ENCODE measurements at regions of chr2 and their contacts with region 1.

Region 1: GRCh38 chr2:25558262-25558661 is 115.1 kb downstream of the DTNB start:
- DNase-seq: peak; percentile 61
- H3K4me3 Mint-ChIP-seq: peak overlapping the region; percentile 34
- H3K27ac Mint-ChIP-seq: peak overlapping the region; percentile 94
- H3K4me1 Mint-ChIP-seq: peaks cover 59% of the 10 kb centered on the region
- H3K27me3 Mint-ChIP-seq: no peaks in the 10 kb centered on the region

Region 2: DNA sequence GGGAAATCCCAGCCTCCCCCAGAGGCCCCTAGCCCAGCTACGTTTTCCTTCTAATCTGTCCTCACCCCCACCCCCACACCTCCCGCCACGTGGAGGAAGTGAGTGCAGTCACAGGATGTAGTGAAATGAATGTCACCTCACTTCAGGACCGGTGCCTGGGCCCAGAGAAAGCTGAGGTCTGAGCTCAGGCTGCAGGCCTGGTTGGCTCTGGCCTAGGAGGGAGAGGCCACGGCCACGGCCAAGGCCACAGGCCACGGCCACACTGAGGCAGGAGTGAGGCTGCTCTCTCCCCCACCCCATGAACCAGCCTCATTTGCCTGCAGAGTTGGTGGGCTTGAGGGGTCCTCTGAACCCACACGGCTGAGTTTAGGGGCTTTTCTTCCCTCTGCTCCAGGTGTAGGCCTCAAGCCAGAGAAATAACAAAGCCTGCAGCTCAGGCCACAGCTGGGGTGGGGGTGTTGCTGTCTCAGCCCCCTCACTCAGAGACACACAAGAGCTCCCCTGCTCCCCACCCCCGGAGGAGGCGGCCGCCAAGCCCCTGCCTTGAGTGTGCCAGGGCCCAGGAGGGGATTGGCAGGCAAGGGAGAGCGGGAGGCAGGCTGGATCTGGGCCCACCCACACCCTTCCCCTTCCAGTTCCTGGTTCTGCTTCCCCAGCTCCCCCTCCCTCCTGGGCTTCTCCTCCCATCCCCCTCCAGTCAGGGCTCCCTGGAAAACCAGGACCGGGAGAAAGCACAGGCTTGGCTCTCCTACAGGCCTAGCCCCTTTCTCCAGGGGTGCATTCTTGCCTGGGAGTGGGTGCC is 243.5 kb before region 1 on chr2:
- intact Hi-C with region 1: loop called (anchors 2 kb)
- DNase-seq: peak; percentile 72
- H3K4me3 Mint-ChIP-seq: peak overlapping the region; percentile 86
- H3K27ac Mint-ChIP-seq: peak overlapping the region; percentile 97
- H3K4me1 Mint-ChIP-seq: peaks cover 53% of the 10 kb centered on the region
- H3K27me3 Mint-ChIP-seq: no peaks in the 10 kb centered on the region

Region 3: GRCh38 chr2:25362049-25362433 is 196.2 kb before region 1 on chr2:
- intact Hi-C with region 1: loop called (anchors 1 kb)
- DNase-seq: peak; percentile 93
- H3K4me3 Mint-ChIP-seq: peak overlapping the region; percentile 81
- H3K27ac Mint-ChIP-seq: peak overlapping the region; percentile 92
- H3K4me1 Mint-ChIP-seq: peaks cover 8% of the 10 kb centered on the region
- H3K27me3 Mint-ChIP-seq: no peaks in the 10 kb centered on the region

Region 4: GRCh38 chr2:25453199-25453905 is 104.9 kb before region 1 on chr2:
- intact Hi-C with region 1: loop called (anchors 1 kb)
- DNase-seq: peak; percentile 21
- H3K4me3 Mint-ChIP-seq: peak overlapping the region; percentile 21
- H3K27ac Mint-ChIP-seq: peak overlapping the region; percentile 89
- H3K4me1 Mint-ChIP-seq: peaks cover 32% of the 10 kb centered on the region
- H3K27me3 Mint-ChIP-seq: no peaks in the 10 kb centered on the region

Region 5: GRCh38 chr2:25543939-25544844 is 14.1 kb before region 1 on chr2:
- intact Hi-C with region 1: loop called (anchors 2 kb)
- DNase-seq: no peak
- H3K4me3 Mint-ChIP-seq: no peak overlapping the region
- H3K27ac Mint-ChIP-seq: no peak overlapping the region
- H3K4me1 Mint-ChIP-seq: peaks cover 20% of the 10 kb centered on the region
- H3K27me3 Mint-ChIP-seq: no peaks in the 10 kb centered on the region

Region 6: GRCh38 chr2:25614686-25615085 is 56.4 kb after region 1 on chr2:
- intact Hi-C with region 1: no loop called
- DNase-seq: no peak
- H3K4me3 Mint-ChIP-seq: no peak overlapping the region
- H3K27ac Mint-ChIP-seq: no peak overlapping the region
- H3K4me1 Mint-ChIP-seq: no peaks in the 10 kb centered on the region
- H3K27me3 Mint-ChIP-seq: no peaks in the 10 kb centered on the region

Region 7: DNA sequence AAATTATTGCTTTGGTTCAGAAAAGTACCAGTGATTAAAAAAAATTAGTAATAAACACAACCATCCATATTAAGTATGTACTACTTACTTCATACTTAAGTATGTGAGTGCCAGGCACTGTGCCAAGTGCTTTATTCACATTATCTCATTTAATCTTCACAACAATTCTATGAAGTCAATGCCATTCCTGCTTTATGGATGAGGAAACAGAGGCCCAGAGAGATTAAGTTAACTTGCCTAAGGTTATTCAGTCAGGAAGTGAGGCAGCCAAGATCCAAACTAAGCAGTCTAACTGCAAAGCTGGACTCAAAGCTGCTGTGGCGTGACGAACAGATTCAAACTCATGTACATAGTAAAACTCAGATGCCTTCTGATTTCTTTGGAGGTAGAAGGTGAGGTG is 92.8 kb after region 1 on chr2:
- intact Hi-C with region 1: no loop called
- DNase-seq: no peak
- H3K4me3 Mint-ChIP-seq: no peak overlapping the region
- H3K27ac Mint-ChIP-seq: no peak overlapping the region
- H3K4me1 Mint-ChIP-seq: peaks cover 2% of the 10 kb centered on the region
- H3K27me3 Mint-ChIP-seq: no peaks in the 10 kb centered on the region

Region 8: DNA sequence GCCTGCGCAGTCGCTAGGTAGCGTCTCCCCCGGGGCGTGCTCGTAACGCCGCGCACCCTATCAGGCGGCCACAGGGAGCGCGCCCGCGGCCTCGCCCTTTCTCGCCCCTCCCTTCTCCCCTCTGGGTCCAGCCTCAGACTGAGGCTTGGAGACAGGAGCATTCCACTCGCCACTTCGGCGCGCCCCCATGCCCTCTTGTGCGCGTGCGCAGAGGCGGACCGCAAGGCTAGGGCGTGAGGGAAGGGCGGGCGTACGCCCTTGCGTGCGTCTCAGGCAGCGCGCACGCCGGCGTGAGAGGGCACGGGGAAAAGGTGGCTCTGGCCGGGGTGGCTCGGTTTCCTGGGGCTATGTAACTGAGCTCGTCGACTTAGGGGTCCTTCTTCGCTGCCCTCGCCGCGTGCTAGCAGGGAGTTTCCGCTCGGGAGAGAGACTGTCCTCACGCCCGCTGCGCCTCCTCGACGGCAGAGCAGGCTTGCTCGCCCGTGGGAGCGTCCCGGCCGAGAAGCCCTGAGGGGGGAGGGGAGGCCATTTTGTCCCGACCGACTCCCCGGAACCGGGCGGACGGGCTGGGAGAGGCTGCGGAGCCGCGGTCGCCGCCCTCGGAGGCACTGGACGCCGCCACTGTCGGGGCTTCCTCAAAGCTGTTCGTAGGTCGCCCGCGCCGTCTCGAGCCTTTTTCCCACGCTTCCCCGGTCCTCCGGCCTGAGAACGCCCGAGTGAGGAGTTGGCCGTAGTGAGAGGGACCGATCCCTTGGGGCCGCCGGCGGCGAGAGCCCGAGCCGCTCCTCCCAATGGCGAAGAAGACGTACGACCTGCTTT is 475.8 kb after region 1 on chr2 and contains the start of gene RAB10:
- intact Hi-C with region 1: no loop called
- DNase-seq: peak; percentile 100
- H3K4me3 Mint-ChIP-seq: peak within 1 kb of the TSS; percentile 93
- H3K27ac Mint-ChIP-seq: peak within 1 kb of the TSS; percentile 88
- H3K4me1 Mint-ChIP-seq: peaks cover 19% of the 10 kb centered on the region
- H3K27me3 Mint-ChIP-seq: peaks cover 2% of the 10 kb centered on the region
- total RNA-seq, gene RAB10: 134 and 140 TPM in 2 replicates